Gastrocnemius medialis (tissue), 4 donors: ENCODE measurements at regions of chr13 and their contacts with region 1.

Region 1: DNA sequence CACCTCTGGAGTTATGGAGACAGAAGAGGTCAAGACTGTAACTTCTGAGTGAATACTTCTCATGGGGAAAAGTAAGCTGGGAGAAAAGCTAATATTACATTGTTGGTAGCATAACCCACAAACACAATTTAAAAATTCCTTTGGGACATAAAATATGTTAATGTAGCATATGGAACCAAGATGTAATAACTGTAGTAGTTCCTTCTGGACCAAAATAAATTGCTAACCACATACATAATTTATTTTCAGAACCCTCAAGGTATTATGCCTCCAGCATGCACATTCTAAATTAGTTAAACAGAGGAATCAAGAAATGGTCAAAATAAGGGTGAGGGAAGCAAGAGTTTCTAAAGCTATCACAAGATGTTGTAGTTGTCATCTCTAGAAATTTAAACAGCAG is 4.8 kb upstream of the RNF17 start:
- DNase-seq: no peak
- ATAC-seq: no peak
- H3K4me3 ChIP-seq: no peak overlapping the region
- H3K27ac ChIP-seq: no peak overlapping the region
- H3K4me1 ChIP-seq: no peaks in the 10 kb centered on the region
- H3K27me3 ChIP-seq: peaks cover 0 to 2% (median 0%) of the 10 kb centered on the region in 3 donors
- CTCF ChIP-seq: no peak
- POLR2A ChIP-seq: no peak

Region 2: DNA sequence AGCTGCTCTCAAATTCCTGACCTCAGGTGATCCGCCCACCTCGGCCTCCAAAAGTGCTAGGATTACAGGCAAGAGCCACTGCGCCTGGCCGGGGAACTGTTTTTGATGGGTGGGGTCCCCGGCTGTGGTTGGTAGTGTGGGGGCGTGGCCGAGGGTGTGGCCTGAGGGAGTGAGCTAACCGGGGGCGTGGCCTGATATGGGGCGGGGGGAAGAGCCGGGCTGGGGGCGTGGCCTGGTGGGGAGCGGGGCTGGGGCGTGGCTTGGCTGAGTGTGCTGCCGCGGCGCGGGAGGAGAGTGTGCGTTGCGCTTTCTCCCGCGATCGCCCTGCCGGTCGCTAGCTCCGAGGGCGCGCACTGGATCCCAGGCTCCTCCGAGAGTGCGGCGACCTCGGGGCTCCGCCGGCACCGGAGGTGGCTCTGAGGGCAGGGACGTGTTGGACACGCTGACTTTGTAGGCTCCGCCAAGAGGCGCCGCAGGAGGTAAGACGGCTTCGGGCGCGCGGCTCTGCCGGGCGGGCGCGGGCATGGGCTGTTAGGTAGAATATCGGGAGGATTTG is 598.7 kb before region 1 on chr13 and contains the start of gene SPATA13:
- in situ Hi-C with region 1: no loop called
- intact Hi-C with region 1: no loop called
- DNase-seq: peak; percentile 72 to 76
- ATAC-seq: peak; percentile 68 to 89
- H3K4me3 ChIP-seq: peak within 1 kb of the TSS; percentile 54 to 82 (median 71)
- H3K27ac ChIP-seq: peak within 1 kb of the TSS; percentile 58 to 72 (median 70)
- H3K4me1 ChIP-seq: peaks cover 6 to 20% of the 10 kb centered on the region in 2 donors
- H3K27me3 ChIP-seq: peaks cover 0 to 21% (median 19%) of the 10 kb centered on the region in 3 donors
- CTCF ChIP-seq: no peak
- POLR2A ChIP-seq: peak; percentile 43 to 56
- total RNA-seq, gene SPATA13: 3.2 to 17.0 (median 5.8) TPM

Region 3: DNA sequence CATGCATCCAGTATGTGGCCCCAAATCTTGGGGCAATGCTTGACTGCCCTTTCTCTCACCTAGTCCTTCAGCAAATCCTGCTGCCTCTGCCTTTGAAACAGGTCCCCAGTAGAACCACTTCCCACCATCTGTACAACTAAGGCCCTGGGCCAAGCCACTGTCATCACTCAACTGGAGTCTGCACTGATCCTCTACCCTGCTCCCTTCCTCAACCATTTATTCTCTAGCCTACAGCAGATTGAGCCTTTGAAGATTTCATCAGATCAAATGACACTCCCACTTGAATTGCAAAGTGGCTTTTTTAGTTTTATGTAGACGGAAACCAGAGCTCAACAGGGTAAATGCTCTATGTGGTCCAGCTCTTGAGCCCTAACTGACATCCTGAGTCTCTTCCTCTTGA is 656.0 kb after region 1 on chr13:
- in situ Hi-C with region 1: no loop called
- intact Hi-C with region 1: loop called (anchors 5 kb)
- DNase-seq: no peak
- ATAC-seq: no peak
- H3K4me3 ChIP-seq: no peak overlapping the region
- H3K27ac ChIP-seq: no peak overlapping the region
- H3K4me1 ChIP-seq: no peaks in the 10 kb centered on the region
- H3K27me3 ChIP-seq: peaks cover 0 to 3% (median 2%) of the 10 kb centered on the region in 3 donors
- CTCF ChIP-seq: no peak
- POLR2A ChIP-seq: no peak